Right ventricle myocardium superior (tissue), 1 donor: ENCODE measurements at regions of chr11 and their contacts with region 1.

Region 1: GRCh38 chr11:7098235-7098832 is 9.5 kb downstream of the RBMXL2 start:
- DNase-seq: no peak
- ATAC-seq: peak; percentile 74

Region 2: DNA sequence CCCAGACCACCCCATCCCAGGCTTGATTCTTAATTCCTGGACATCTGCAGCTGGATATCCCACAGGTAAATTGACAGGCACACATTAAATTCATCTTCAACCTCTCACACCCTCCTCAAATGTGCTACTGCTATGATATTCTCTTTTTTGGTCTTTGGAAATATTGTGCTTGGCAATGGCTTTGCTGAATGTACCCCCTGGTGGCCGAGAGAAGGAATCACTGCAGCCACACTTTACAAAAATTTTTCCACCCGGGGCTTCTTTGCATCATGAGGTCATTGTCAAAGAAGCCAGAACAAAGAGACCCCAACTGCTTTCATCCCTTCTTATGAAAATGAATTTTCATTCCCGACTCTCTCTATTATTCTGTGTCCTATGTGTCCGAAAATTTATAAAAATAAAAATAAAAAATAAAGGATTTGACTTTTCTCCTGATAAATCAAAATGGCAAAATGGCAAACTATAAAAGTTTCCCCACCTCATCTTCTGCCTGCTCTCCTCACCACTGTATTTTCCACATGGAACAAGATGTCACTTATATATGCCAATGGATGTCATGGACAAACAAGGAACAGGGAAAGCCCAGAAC is 590.0 kb after region 1 on chr11:
- intact Hi-C with region 1: loop called (anchors 10 kb)
- DNase-seq: no peak
- ATAC-seq: peak; percentile 45